ENCODE measurements at regions of chr6 and their contacts with region 1.

Region 1: DNA sequence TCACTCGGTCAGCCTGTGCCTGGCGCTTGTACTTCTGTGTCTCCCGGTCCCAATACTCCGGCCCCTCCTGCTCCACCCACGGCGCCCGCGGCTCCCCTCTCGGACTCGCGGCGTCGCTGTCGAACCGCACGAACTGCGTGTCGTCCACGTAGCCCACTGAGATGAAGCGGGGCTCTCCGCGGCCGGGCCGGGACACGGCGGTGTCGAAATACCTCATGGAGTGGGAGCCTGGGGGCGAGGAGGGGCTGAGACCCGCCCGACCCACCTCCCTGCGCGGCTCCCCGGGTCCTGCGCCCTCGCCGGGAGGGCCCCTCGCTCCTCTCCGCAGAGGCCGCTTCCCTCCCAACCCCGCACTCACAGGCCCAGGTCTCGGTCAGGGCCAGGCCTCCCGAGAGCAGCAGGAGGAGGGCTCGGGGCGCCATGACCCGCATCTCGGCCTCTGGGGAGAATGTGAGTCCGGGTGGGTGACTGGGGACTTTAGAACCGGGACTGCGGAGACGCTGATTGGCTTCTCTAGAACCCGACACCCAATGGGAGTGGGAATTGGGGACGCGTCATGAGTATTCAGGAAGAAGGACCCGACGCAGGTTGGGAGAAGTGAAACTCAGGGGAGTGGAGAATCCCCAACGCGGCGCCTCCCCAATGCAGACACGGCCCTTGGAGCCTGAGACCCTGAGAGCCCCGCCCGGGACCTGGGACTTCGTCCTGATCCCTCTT is at the start of gene HLA-C:
- DNase-seq: peak; percentile 96
- H3K4me3 ChIP-seq: peak within 1 kb of the TSS; percentile 41 to 89 (median 78)
- H3K27ac ChIP-seq: peak within 1 kb of the TSS; percentile 78 to 100 (median 98)
- H3K4me1 ChIP-seq: peaks cover 0 to 15% (median 6%) of the 10 kb centered on the region in 4 donors
- H3K27me3 ChIP-seq: no peaks in the 10 kb centered on the region
- CTCF ChIP-seq: peak in 1 of 5 experiments; percentile 14
- EP300 ChIP-seq: no peak
- POLR2A ChIP-seq: peak; percentile 86
- total RNA-seq, gene HLA-C: 200 to 1,614 (median 1,271) TPM

Region 2: DNA sequence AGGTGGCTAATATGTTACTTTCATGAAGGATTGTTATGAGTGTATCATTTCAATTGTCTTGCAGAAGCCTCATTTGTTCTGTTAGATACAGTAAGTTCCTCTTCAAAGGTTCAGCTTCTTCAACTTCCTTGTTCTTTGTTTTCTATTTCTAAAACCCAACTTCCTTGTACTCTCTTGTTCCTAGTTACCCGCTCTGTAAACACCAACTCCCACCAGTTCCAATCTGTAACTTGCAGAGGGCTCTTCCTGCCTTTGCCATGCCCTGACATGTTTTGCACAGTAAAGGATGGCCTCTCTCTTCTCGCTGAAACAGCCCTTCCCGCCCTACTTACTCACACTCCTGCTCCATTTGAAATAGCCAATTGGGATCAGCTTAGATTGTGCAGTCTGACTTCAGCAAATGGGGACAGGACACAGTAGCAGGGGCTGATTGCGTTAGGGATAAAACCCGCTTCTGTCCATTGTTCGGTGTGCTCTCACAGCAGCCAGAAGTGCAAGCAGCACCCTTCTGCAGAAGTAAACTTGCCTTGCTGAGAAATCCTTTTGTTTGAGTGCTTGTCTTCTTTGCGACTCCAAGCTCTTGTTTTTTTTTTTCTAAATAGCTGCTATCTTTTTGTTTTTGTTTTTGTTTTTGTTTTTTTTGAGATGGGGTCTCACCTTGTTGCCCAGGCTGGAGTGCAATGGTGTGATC is 55.4 kb before region 1 on chr6:
- in situ Hi-C with region 1: loop called in 1 of 4 experiments (anchors 10 kb)
- intact Hi-C with region 1: no loop called
- DNase-seq: no peak
- H3K4me3 ChIP-seq: no peak overlapping the region
- H3K27ac ChIP-seq: peak overlapping the region in 2 of 4 donors; percentile 50 to 59
- H3K4me1 ChIP-seq: no peaks in the 10 kb centered on the region
- H3K27me3 ChIP-seq: no peaks in the 10 kb centered on the region
- CTCF ChIP-seq: no peak
- EP300 ChIP-seq: no peak
- POLR2A ChIP-seq: no peak

Region 3: DNA sequence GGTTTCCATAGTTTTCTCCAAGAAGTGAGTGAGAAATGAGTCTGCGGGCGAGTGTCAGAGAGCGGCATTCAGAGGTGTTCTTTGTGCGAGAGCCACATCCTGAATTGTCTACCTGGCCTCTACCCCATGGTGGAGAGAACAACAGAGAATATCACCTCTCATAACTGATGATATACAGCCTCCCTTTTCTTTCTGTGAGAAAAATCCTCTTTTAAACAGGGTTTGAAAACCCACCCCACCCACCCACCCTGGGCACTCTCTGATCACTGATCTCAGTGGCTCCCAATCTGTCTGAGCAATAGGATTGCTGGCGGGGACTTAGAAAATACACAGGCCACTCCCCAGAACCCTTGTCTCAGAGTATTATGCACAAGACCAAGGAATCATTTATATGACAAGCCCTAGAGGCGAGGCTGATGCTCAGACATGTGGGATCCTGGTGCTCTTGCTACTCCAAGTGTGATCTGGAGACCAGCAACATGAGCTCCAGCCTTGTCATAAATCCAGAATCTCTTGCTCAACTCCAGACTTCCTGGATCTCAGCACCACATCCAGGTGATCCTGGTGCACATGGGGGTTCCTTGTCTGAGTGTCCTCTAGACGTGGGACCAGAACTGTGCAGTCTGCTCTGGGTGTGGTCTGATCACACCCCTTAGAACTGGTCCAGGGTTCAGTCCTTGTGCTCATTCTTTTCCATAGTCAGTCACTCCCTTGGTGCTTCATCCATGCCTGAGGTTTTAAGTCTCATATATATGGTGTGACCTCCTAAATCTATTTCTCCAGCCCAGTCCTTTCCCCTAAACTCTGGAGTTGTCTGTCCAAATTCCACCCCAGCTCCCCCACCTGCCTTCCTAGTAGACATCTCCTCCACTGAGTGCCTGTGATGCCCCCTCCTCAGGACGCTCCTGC is 79.9 kb after region 1 on chr6:
- in situ Hi-C with region 1: loop called in 3 of 4 experiments (anchors 5 kb)
- intact Hi-C with region 1: no loop called
- DNase-seq: no peak
- H3K4me3 ChIP-seq: no peak overlapping the region
- H3K27ac ChIP-seq: no peak overlapping the region
- H3K4me1 ChIP-seq: peaks cover 6 to 22% (median 16%) of the 10 kb centered on the region in 4 donors
- H3K27me3 ChIP-seq: no peaks in the 10 kb centered on the region
- CTCF ChIP-seq: no peak
- EP300 ChIP-seq: no peak
- POLR2A ChIP-seq: no peak

Region 4: DNA sequence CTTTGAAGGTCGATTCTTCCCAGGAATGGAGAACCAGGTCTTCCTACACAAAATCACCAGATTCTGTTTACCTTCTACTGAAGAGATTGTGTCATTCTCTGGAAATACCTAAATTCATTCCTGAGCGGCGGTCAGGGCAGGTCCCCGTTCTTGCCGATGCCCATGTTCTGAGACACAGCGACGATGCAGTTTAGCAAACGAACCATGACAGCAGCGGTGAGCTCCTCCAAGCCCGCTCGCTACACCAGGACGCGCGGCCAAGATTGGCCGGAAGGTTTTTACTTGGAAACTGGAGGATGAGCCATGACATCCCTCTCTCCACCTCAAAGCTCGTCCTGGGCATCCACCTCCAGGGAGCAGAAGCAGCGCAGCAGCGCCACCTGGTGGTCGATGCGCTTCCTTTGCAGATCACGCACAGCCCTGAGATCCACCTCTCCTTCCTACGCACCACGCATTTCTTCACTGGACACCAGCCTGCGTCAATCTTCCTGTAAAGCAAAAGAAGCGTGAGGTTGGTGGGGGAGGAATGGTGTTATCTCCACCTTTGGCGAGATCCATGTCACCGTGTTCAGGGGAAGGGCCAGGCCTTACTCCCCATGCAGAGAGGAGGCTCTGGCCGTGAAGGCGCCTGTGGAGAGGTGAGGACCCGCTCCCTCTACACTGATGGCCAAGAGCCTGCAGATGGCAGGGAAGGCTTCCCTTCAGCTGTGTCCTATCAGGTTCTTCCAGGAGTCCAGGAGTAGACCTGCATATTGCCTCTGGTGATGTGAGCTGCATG is 95.1 kb after region 1 on chr6:
- in situ Hi-C with region 1: no loop called
- intact Hi-C with region 1: loop called (anchors 1 kb)
- DNase-seq: peak; percentile 90
- H3K4me3 ChIP-seq: peak overlapping the region in 1 of 4 donors; percentile 36
- H3K27ac ChIP-seq: no peak overlapping the region
- H3K4me1 ChIP-seq: peaks cover 0 to 4% (median 2%) of the 10 kb centered on the region in 4 donors
- H3K27me3 ChIP-seq: peaks cover 33% of the 10 kb centered on the region
- CTCF ChIP-seq: peak; percentile 91 to 98 (median 92)
- EP300 ChIP-seq: no peak
- POLR2A ChIP-seq: no peak

Measured in transverse colon (tissue), 4 donors.